Heart right ventricle (tissue), 16 donors: ENCODE measurements at regions of chr2 and their contacts with region 1.

Region 1: GRCh38 chr2:197675711-197676188 is 363 bp upstream of the RFTN2 start:
- DNase-seq: peak in 1 of 2 donors; percentile 25
- ATAC-seq: peak; percentile 55 to 80 (median 70)
- H3K4me3 ChIP-seq: peak overlapping the region; percentile 20 to 58 (median 50)
- H3K27ac ChIP-seq: peak overlapping the region in 9 of 10 donors; percentile 49 to 89 (median 76)
- H3K4me1 ChIP-seq: peaks cover 0 to 33% (median 9%) of the 10 kb centered on the region in 9 donors
- H3K27me3 ChIP-seq: peaks cover 0 to 3% (median 0%) of the 10 kb centered on the region in 7 donors
- CTCF ChIP-seq: no peak

Region 2: GRCh38 chr2:197515739-197516392 is 159.9 kb before region 1 on chr2 and contains the start of gene MOB4:
- intact Hi-C with region 1: loop called in 1 of 10 experiments (anchors 5 kb)
- DNase-seq: peak; percentile 95 to 97
- ATAC-seq: peak; percentile 98 to 100 (median 99)
- H3K4me3 ChIP-seq: peak within 1 kb of the TSS; percentile 78 to 96 (median 84)
- H3K27ac ChIP-seq: peak within 1 kb of the TSS; percentile 90 to 99 (median 94)
- H3K4me1 ChIP-seq: peaks cover 0 to 43% (median 30%) of the 10 kb centered on the region in 9 donors
- H3K27me3 ChIP-seq: no peaks in the 10 kb centered on the region
- CTCF ChIP-seq: peak in 1 of 9 donors; percentile 23
- total RNA-seq, gene MOB4: 20.9 to 43.2 (median 30.5) TPM

Region 3: DNA sequence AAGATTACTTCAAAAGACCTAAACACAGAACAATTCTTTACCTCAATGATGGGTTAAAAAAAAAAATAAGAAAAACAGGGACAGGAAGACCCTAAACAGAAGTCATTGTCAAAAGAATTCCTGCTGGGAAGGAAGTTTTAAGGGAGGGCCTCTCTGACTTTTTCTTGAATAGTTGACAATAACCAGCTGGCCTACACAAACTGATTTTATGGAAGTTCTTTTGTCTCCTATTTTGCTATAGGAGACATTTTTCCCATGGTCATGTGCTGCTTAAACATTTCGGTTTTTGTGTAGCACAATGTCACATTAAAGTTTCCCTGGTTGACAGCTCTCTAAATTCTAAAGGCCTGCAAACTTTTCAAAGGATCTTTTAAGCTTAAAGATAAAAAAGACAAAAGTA is 55.6 kb before region 1 on chr2:
- intact Hi-C with region 1: loop called in 2 of 10 experiments (anchors 5 kb)
- DNase-seq: no peak
- ATAC-seq: peak in 3 of 8 donors; percentile 20 to 56 (median 54)
- H3K4me3 ChIP-seq: no peak overlapping the region
- H3K27ac ChIP-seq: peak overlapping the region; percentile 9 to 84 (median 54)
- H3K4me1 ChIP-seq: peaks cover 0 to 19% (median 0%) of the 10 kb centered on the region in 9 donors
- H3K27me3 ChIP-seq: no peaks in the 10 kb centered on the region
- CTCF ChIP-seq: no peak

Region 4: GRCh38 chr2:197628043-197628500 is 47.7 kb before region 1 on chr2:
- intact Hi-C with region 1: loop called in 2 of 10 experiments (anchors 5 kb)
- DNase-seq: peak in 1 of 2 donors; percentile 23
- ATAC-seq: peak in 7 of 8 donors; percentile 69 to 92 (median 81)
- H3K4me3 ChIP-seq: no peak overlapping the region
- H3K27ac ChIP-seq: peak overlapping the region in 9 of 10 donors; percentile 21 to 79 (median 63)
- H3K4me1 ChIP-seq: peaks cover 0 to 20% (median 11%) of the 10 kb centered on the region in 9 donors
- H3K27me3 ChIP-seq: no peaks in the 10 kb centered on the region
- CTCF ChIP-seq: no peak